ENCODE measurements at regions of chr20 and their contacts with region 1.

Region 1: DNA sequence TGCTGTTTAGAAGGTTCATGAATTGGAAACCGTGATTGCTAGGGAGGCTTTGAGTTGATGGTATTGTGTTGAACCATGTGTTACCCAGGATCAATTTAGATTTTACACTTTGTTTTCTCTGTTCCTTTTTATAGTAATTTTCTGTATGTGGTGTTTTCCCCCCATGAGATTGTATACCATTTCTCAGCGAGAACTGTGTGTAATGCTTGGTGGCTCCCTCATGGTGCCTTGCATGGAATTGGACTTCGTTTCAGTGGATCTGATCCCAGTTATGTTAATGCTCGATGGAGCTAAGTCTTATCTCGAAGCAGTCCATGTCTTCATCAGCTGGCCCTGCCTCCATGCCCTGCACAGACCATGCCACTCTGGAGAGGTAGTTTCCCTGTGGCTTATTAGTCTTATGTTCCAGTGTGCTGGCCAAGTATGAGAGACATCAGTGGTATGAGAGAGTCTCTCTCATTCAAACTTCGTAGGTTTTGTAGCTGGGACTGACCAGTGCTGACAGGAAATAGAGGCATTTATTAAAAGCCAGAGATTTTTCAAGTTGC is 18.7 kb downstream of the PTPN1 start:
- H3K4me3 Mint-ChIP-seq: no peak overlapping the region
- H3K27ac Mint-ChIP-seq: no peak overlapping the region
- H3K4me1 Mint-ChIP-seq: peaks cover 34% of the 10 kb centered on the region
- H3K27me3 Mint-ChIP-seq: no peaks in the 10 kb centered on the region

Region 2: DNA sequence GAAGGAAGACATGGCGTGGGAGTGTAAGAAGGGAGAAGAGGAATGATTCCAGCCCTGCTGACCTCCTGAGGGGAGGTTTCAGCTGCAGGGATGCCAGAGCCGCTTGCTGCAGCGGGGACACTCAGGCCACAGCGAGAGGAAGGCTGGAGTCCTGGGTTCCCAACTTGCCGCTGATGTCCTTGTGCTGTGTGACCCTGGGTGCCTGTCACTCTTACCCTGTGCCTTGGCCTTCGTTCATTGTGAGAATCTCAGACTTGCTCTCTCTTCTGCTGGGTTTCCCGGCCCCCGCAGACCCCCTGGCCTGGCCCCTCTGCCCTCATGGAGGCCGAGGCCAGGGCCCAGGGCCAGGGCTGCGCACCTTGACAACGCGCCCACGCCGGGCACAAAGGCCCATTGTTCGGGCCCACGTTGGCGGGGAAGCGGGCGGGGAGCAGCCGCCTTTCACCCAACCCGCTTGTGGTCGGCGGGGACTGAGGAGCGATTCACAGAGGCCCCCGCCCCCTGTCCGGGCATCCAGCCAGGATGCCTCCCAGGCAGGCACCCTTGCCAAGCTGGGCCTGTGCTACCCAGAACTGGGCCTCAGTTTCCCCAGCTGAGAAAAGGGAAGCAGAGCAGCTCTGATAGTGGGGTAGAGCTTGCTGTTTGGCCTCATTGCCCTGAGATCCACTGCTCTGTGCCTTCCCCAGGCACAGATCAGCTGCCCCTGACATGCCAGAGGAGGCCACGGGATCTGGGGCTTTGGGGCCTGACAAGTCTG is 285.8 kb before region 1 on chr20:
- intact Hi-C with region 1: no loop called
- H3K4me3 Mint-ChIP-seq: no peak overlapping the region
- H3K27ac Mint-ChIP-seq: peak overlapping the region; percentile 5
- H3K4me1 Mint-ChIP-seq: peaks cover 24% of the 10 kb centered on the region
- H3K27me3 Mint-ChIP-seq: peaks cover 23% of the 10 kb centered on the region

Region 3: GRCh38 chr20:50415516-50416113 is 113.3 kb before region 1 on chr20:
- intact Hi-C with region 1: no loop called
- H3K4me3 Mint-ChIP-seq: no peak overlapping the region
- H3K27ac Mint-ChIP-seq: peak overlapping the region; percentile 15
- H3K4me1 Mint-ChIP-seq: peaks cover 44% of the 10 kb centered on the region
- H3K27me3 Mint-ChIP-seq: peaks cover 9% of the 10 kb centered on the region

Region 4: DNA sequence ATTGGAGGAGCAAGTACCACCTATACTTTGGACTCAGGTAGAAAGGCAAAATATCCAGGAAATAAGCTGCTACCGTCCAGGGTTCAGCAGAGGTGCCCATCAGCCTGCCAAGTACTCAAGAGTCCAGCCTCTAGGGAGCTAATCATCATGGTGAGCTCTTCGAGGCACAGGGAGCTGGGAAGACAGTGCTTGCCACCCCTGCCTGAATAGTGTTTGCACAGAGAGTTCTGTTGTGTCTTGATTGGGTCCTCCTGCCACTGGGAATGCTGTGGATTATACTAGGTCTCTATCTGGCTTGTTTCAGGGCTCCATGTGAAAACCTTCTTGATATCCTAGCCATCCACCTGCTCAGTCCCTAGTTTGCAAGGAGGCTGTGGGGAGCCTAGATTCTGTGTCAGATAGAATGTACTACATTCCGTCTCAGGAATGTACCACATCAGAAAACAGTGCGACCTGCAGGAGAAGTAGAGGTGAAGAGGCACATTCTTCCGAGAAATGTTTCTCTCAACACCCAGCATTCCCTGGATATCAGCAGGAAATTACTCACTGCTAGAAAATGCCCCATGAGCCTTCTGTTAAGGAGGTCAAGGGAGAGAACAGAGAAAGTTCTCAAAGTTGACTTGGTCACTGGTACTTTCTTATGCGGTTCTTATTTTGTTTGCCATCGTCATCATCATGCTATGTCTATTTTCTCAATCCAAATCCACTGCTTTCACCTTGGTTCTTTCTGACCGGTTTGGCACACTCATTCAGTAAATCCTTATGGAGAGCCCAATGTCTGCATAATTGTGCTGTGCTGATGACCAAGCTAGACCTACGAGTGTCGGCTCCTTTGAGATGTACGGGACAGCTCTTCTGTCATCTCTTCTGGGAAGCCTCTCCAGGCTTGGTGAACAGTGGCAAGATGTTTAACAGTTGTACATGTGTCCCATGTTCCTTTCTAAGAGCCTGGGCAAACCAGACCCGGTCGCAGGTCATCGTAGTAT is 12.0 kb after region 1 on chr20:
- intact Hi-C with region 1: no loop called
- H3K4me3 Mint-ChIP-seq: no peak overlapping the region
- H3K27ac Mint-ChIP-seq: peak overlapping the region; percentile 76
- H3K4me1 Mint-ChIP-seq: peaks cover 60% of the 10 kb centered on the region
- H3K27me3 Mint-ChIP-seq: no peaks in the 10 kb centered on the region

Region 5: DNA sequence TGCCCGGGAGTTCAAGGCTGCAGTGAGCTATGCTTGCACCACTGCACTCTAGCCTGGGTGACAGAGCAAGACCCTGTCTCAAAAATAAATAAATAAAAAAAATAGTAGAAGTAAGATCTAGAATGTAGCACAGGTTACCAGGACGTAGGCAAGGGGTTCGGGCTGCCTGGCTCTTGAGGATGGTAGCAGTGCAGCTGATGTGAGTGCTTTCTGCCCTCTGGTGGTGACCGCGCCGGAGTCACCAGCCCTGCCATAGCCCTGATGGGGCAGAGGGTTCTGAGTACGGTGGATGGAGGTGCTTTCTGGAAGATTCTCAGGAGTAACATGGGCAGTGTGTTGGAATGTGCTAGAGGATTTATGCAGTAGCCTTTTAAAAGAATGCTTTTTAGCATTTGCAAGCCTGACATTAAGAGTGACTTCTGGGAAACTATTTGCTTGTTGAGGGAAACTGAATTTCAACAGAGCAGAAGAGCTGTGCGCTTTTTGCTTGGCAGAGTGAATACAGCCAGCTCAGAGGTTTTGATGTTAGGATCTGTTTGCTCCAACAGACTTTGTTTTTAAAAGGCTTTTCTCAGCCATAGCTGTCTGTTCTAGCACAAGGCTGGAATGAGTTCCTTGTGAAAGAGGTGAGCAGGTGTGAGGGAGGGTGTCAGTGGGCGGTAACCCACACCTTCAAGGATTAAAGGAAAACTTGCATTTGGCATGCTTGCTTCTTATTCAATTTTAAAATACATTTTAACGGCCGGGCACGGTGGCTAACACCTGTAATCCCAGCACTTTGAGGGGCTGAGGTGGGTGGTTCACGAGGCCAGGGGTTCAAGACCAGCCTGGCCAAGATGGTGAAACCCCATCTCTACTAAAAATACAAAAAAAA is 47.2 kb after region 1 on chr20:
- intact Hi-C with region 1: loop called (anchors 10 kb)
- H3K4me3 Mint-ChIP-seq: no peak overlapping the region
- H3K27ac Mint-ChIP-seq: no peak overlapping the region
- H3K4me1 Mint-ChIP-seq: peaks cover 13% of the 10 kb centered on the region
- H3K27me3 Mint-ChIP-seq: no peaks in the 10 kb centered on the region